ENCODE measurements at regions of chr10 and their contacts with region 1.

Region 1: GRCh38 chr10:3197348-3198003 is 24.9 kb upstream of the PITRM1 start:
- DNase-seq: peak; percentile 65 to 88 (median 77)
- H3K4me3 ChIP-seq: peak overlapping the region in 51 of 59 donors; percentile 1 to 62 (median 34)
- H3K27ac ChIP-seq: peak overlapping the region in 3 of 59 donors; percentile 2 to 51 (median 22)
- H3K27me3 ChIP-seq: peaks cover 0 to 6% (median 0%) of the 10 kb centered on the region in 45 donors
- CTCF ChIP-seq: peak; percentile 37 to 94 (median 84)

Region 2: DNA sequence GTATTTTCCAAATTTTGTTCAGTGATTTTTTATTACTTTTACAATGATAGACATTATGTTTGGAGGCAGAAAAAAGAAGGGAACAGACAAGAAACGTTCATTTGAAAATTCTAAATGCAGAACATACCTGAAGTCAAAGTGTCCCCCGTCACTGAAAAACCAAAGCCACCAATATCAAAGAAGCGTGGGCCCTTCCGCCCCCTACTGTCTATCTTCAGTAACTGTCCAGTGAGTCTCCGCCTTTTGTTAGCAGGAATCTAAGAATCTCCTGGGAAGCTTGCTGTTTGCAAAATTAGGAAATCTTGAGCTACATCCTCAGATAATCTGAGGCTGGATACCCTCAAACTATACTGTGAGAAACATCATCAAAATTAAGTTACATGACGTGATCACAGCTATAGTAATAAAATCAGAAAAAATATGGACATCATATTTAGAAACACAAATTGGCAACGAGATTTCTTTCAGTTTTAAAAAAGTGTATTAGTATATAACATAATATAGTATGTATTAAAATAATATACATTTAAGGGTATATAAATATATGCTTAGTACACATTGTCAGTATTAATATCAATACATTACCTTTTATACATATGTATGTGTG is 1459.2 kb after region 1 on chr10:
- intact Hi-C with region 1: loop called (anchors 5 to 10 kb)
- DNase-seq: peak in 6 of 10 donors; percentile 32 to 68 (median 58)
- H3K4me3 ChIP-seq: no peak overlapping the region
- H3K27ac ChIP-seq: no peak overlapping the region
- H3K27me3 ChIP-seq: no peaks in the 10 kb centered on the region
- CTCF ChIP-seq: peak; percentile 66 to 97 (median 88)

Region 3: GRCh38 chr10:4663162-4663904 is 1465.9 kb after region 1 on chr10:
- intact Hi-C with region 1: loop called (anchors 5 to 10 kb)
- DNase-seq: peak in 3 of 10 donors; percentile 31 to 49 (median 32)
- H3K4me3 ChIP-seq: peak overlapping the region in 1 of 59 donors; percentile 14
- H3K27ac ChIP-seq: peak overlapping the region in 40 of 59 donors; percentile 2 to 86 (median 56)
- H3K27me3 ChIP-seq: no peaks in the 10 kb centered on the region
- CTCF ChIP-seq: no peak